ENCODE measurements at regions of chr22 and their contacts with region 1.

Region 1: DNA sequence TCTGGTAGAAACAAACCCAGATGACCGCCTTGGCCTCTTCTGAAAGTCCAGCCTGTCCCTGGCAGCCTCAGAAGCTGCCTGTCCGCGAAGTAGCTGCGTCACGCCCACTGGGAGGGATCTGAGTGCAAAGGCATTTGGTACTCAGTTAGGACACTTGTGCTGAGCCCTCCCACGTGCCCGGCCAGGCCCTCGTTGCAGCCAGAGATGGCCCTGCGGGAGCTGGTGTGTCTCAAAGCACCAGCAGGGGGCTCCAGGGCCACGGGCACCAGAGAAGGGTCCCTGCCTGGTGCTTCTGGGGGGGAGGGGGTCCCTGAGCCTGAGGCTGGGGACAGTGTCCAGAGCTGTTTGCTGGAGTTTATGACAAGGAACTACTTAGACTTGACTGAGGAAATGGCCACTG is 5.8 kb downstream of the SELENOO start:
- DNase-seq: peak; percentile 87
- H3K4me3 ChIP-seq: no peak overlapping the region
- H3K27ac ChIP-seq: no peak overlapping the region
- H3K4me1 ChIP-seq: peaks cover 0 to 7% of the 10 kb centered on the region in 2 experiments; a peak in 1 of 4 replicates
- H3K27me3 ChIP-seq: no peaks in the 10 kb centered on the region
- CTCF ChIP-seq: peak; percentile 54
- EP300 ChIP-seq: no peak
- RAD21 ChIP-seq: peak; percentile 22; the same call in 1 of the 2 replicates

Region 2: GRCh38 chr22:50190182-50190940 is 16.2 kb before region 1 on chr22:
- CTCF ChIA-PET with region 1: interaction called, 13 read pairs
- POLR2A ChIA-PET with region 1: no interaction called
- DNase-seq: peak; percentile 91
- H3K4me3 ChIP-seq: no peak overlapping the region
- H3K27ac ChIP-seq: peak overlapping the region in 1 of 2 experiments; percentile 65; a peak in 2 of 4 replicates
- H3K4me1 ChIP-seq: peaks cover 4 to 42% of the 10 kb centered on the region in 2 experiments; a peak in 2 of 4 replicates
- H3K27me3 ChIP-seq: no peaks in the 10 kb centered on the region
- CTCF ChIP-seq: peak; percentile 32; the same call in 1 of the 2 replicates
- EP300 ChIP-seq: no peak
- RAD21 ChIP-seq: no peak

Region 3: GRCh38 chr22:50218996-50219727 is 12.6 kb after region 1 on chr22:
- CTCF ChIA-PET with region 1: interaction called, 12 read pairs
- POLR2A ChIA-PET with region 1: no interaction called
- DNase-seq: peak; percentile 87
- H3K4me3 ChIP-seq: no peak overlapping the region
- H3K27ac ChIP-seq: no peak overlapping the region
- H3K4me1 ChIP-seq: peaks cover 0 to 22% of the 10 kb centered on the region in 2 experiments; a peak in 1 of 4 replicates
- H3K27me3 ChIP-seq: no peaks in the 10 kb centered on the region
- CTCF ChIP-seq: no peak
- EP300 ChIP-seq: no peak
- RAD21 ChIP-seq: no peak

Region 4: DNA sequence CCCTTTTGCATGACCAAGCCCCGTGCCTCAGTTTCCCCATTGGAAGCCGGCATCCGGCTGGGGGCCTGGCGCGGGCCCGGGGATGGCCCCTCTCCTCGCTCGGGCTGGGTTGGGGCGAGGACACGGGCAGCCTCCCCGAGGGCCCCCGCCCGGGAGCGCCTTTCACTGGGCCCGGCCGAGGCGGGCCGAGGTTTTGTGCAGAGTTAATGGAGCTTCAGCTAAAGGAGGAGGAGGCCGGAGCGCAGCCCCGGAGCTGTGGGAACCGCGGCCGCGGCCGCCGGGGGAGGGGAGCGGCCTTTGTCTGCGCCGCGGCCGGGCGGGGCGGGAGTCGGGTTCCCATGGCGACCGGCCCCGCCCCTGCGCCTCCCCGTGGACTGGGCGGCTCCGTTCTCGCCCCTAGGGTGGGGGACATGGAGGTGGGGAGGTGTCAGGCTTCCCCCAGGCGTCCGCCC is 64.9 kb after region 1 on chr22:
- CTCF ChIA-PET with region 1: no interaction called
- POLR2A ChIA-PET with region 1: no interaction called
- DNase-seq: peak; percentile 93
- H3K4me3 ChIP-seq: peak overlapping the region; percentile 60 to 71
- H3K27ac ChIP-seq: peak overlapping the region; percentile 53 to 85; a peak in 3 of 4 replicates
- H3K4me1 ChIP-seq: peaks cover 7 to 23% of the 10 kb centered on the region in 2 experiments; a peak in 2 of 4 replicates
- H3K27me3 ChIP-seq: no peaks in the 10 kb centered on the region
- CTCF ChIP-seq: peak; percentile 27; the same call in 1 of the 2 replicates
- EP300 ChIP-seq: no peak
- RAD21 ChIP-seq: no peak